Activated CD4-positive, alpha-beta memory T cell treated with anti-CD3 and anti-CD28 coated beads, Interleukin-2, amount 10 ng/mL, durations not matched to agents 7 days and 5 days (primary cell): ENCODE measurements at regions of chr14 and their contacts with region 1.

Region 1: DNA sequence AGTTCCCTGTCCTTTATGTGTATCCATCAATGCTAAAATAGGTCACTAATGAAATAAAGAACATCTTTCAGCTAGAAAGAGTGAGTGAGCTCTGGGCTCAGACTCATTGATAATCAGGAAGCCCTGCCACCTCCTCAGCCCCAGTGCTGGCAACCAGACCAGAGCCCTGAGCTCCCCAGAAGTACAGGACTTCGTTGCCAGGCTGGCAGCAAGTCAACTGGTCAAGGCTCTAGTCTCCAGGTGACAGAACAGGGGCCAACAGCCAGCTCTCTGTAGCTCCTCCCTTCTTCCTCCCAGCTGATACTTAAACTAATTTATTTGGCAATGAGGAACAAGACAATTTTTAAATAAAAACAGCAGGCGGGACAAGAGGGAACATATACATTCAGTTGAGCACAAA is 145.3 kb downstream of the EGLN3 start:
- DNase-seq: no peak
- H3K4me3 Mint-ChIP-seq: no peak overlapping the region
- H3K27ac Mint-ChIP-seq: no peak overlapping the region
- H3K4me1 Mint-ChIP-seq: peaks cover 3% of the 10 kb centered on the region
- H3K27me3 Mint-ChIP-seq: peaks cover 21% of the 10 kb centered on the region

Region 2: DNA sequence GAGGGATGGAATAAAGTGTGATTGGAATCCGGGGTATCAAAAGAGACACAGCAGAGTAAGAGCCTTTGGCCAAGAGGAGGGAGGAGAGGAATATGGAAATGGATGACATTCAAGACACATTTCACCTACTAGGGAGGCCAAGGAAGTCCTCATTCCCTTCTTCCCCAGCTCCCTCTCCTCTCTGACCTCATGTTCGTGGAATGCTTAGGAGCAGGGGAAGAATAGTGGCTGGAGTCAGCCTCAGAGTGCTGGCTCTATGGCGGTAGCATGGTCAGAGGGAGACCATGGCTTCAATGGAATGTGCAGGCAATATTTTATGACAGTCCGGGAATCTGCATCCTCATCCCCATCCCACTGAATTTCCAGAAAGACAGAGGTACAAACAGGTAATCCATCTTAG is 51.3 kb before region 1 on chr14:
- CTCF ChIA-PET with region 1: no interaction called
- POLR2A ChIA-PET with region 1: no interaction called
- DNase-seq: no peak
- H3K4me3 Mint-ChIP-seq: no peak overlapping the region
- H3K27ac Mint-ChIP-seq: no peak overlapping the region
- H3K4me1 Mint-ChIP-seq: no peaks in the 10 kb centered on the region
- H3K27me3 Mint-ChIP-seq: peaks cover 3% of the 10 kb centered on the region

Region 3: DNA sequence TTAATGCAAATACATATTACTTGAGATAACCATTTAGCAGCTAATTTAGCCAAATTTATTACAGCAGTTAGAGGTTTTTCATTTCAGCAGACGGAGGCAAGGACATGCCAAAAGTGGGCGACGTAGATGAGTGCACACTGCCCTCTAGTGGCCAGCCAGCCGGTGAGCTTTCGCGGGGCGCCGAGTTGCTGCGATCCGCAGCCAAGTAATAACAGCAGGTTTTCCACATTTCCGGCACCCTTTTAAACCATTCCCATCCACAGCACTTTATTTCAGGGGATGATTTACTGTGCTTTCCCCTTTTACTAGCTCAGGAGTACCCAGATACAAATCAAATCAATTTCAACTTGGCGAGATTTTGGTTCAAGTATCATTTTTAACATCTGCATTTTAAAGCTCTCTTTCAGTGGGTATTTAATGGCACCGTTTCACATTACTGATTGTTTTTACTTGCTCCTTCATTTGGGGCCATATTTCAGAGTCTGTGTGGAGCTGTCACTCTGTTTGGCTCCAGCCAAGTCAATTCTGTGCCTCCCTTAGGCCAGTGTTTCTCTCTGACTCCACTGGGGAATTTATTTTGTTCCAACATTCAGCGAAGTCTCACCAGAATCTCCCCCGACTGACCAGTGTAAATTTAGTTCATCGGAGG is 12.7 kb before region 1 on chr14:
- CTCF ChIA-PET with region 1: interaction called, 33 read pairs
- POLR2A ChIA-PET with region 1: no interaction called
- DNase-seq: peak; percentile 71
- H3K4me3 Mint-ChIP-seq: peak overlapping the region; percentile 39
- H3K27ac Mint-ChIP-seq: no peak overlapping the region
- H3K4me1 Mint-ChIP-seq: peaks cover 23% of the 10 kb centered on the region
- H3K27me3 Mint-ChIP-seq: peaks cover 22% of the 10 kb centered on the region